BJ (cell line): ENCODE measurements at regions of chr11 and their contacts with region 1.

Region 1: DNA sequence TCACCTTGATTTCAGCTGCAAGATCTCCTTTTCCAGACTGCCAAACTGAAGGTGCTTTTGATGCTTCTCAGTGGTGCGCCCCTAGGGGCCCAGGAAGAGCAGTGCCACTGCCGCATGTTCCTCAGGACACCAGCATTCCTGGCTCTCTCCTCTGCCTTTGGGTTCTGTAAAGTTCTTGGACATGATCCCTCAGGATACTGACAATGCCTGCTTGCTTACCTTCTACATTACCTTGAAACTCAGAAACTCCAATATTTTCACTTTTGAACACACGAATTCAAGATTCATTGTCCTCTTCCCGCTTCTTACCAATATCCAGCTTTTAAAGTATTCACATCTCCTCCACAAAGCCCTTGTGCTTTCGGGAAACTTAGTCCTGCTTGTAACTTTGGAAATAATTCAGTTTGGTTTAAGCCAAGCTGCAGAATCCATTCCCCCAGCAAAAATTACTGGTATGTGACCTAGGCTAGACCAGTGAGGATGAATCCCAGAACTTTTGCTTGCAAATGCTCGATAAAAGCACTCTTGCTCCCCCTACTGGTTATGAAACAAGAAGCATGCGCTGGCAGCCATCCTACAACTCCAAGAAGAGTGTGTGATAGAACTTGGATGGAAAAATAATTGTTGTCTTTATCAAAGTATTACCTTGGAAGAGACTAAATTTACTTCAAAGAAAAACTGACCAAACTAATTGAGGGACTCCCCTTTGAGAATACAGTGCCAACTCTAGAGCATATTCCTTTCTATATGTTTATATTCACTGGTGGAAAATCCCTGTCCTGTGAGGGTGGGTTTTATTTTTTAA is 16.5 kb upstream of the OR5B21 start:
- DNase-seq: peak; percentile 53
- H3K4me3 ChIP-seq: no peak overlapping the region
- H3K27me3 ChIP-seq: no peaks in the 10 kb centered on the region
- CTCF ChIP-seq: peak; percentile 86

Region 2: GRCh38 chr11:57823859-57824258 is 700.6 kb before region 1 on chr11:
- CTCF ChIA-PET with region 1: interaction called, 14 read pairs
- POLR2A ChIA-PET with region 1: no interaction called
- DNase-seq: no peak
- H3K4me3 ChIP-seq: no peak overlapping the region
- H3K27me3 ChIP-seq: no peaks in the 10 kb centered on the region
- CTCF ChIP-seq: no peak

Region 3: GRCh38 chr11:58513747-58514367 is 10.6 kb before region 1 on chr11:
- CTCF ChIA-PET with region 1: interaction called, 51 read pairs
- POLR2A ChIA-PET with region 1: no interaction called
- DNase-seq: peak; percentile 14
- H3K4me3 ChIP-seq: no peak overlapping the region
- H3K27me3 ChIP-seq: no peaks in the 10 kb centered on the region
- CTCF ChIP-seq: peak; percentile 66